ENCODE measurements at regions of chr1 and their contacts with region 1.

Region 1: GRCh38 chr1:91791103-91791502 is 94.8 kb downstream of the TGFBR3 start:
- DNase-seq: peak in 1 of 35 experiments; percentile 29
- ATAC-seq: peak in 3 of 4 experiments; percentile 38 to 55 (median 42)
- H3K4me3 ChIP-seq: no peak overlapping the region
- H3K4me3 Mint-ChIP-seq: peak overlapping the region in 1 of 3 donors; percentile 38
- H3K27ac ChIP-seq: no peak overlapping the region
- H3K27ac Mint-ChIP-seq: peak overlapping the region; percentile 62 to 79
- H3K4me1 ChIP-seq: peaks cover 22 to 27% of the 10 kb centered on the region in 2 experiments
- H3K4me1 Mint-ChIP-seq: peaks cover 31 to 45% (median 41%) of the 10 kb centered on the region in 3 donors
- H3K27me3 ChIP-seq: no peaks in the 10 kb centered on the region
- H3K27me3 Mint-ChIP-seq: no peaks in the 10 kb centered on the region

Region 2: DNA sequence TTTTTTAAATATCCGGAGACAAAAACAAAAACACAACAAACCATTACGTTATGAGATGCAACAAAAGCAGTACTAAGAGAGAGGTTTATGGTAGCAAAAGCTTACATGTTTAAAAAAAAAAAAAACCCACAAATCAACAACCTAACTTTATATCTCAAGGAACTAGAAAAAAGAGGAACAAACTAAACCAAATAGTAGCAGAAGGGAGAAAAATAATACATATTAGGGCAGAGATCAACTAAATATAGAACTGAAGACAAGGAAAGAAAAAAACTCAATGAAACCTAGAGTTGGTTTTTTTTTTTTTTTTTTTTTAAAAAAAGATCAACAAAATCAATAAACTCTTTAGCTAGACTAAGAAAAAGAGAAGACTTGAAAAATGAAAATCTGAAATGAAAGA is 804.1 kb before region 1 on chr1:
- CTCF ChIA-PET with region 1: interaction called in 1 of 2 experiments, 10 read pairs
- POLR2A ChIA-PET with region 1: no interaction called
- DNase-seq: no peak
- ATAC-seq: no peak
- H3K4me3 ChIP-seq: no peak overlapping the region
- H3K4me3 Mint-ChIP-seq: peak overlapping the region in 1 of 3 donors; percentile 2
- H3K27ac ChIP-seq: no peak overlapping the region
- H3K27ac Mint-ChIP-seq: no peak overlapping the region
- H3K4me1 ChIP-seq: peaks cover 0 to 4% of the 10 kb centered on the region in 2 experiments
- H3K4me1 Mint-ChIP-seq: peaks cover 68 to 83% (median 80%) of the 10 kb centered on the region in 3 donors
- H3K27me3 ChIP-seq: no peaks in the 10 kb centered on the region
- H3K27me3 Mint-ChIP-seq: no peaks in the 10 kb centered on the region

Region 3: DNA sequence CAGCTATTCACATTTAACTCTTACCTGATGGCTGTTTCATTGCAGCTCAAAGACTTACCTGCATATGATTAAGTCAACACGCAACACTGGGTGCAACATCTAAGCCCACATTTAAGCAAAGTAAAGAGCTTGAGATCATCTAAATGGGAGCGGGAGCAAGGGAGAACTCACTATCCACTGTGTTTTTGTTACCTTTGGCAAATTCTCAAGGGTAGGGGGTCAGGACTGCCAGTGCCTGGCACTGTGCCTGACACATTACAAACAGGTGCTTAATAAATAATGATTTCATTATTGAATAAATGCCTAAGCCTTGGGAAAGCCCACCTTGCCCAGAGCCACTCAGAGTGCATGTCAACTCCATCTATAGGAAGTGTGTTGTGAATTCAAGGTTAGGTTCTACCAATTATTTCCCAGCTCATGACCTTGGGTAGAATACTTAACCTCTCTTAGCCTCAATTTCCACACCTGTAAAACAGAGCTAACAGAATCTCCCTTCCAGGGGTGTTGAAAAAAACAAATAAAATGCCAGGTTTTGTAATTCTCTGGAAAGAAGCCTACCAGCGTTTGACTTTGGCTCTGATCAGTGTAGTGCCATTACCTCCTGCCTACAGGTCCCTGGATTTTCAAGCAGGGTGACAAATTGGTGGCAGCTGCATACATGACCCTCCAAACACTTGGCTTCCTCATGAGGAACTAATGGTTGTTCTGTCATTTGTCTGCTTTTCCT is 14.9 kb before region 1 on chr1:
- CTCF ChIA-PET with region 1: interaction called in 1 of 2 experiments, 3 read pairs
- POLR2A ChIA-PET with region 1: interaction called in 1 of 2 experiments, 16 read pairs
- DNase-seq: no peak
- ATAC-seq: no peak
- H3K4me3 ChIP-seq: no peak overlapping the region
- H3K4me3 Mint-ChIP-seq: no peak overlapping the region
- H3K27ac ChIP-seq: no peak overlapping the region
- H3K27ac Mint-ChIP-seq: no peak overlapping the region
- H3K4me1 ChIP-seq: peaks cover 0 to 5% of the 10 kb centered on the region in 2 experiments
- H3K4me1 Mint-ChIP-seq: peaks cover 0 to 32% (median 10%) of the 10 kb centered on the region in 3 donors
- H3K27me3 ChIP-seq: no peaks in the 10 kb centered on the region
- H3K27me3 Mint-ChIP-seq: no peaks in the 10 kb centered on the region

Region 4: DNA sequence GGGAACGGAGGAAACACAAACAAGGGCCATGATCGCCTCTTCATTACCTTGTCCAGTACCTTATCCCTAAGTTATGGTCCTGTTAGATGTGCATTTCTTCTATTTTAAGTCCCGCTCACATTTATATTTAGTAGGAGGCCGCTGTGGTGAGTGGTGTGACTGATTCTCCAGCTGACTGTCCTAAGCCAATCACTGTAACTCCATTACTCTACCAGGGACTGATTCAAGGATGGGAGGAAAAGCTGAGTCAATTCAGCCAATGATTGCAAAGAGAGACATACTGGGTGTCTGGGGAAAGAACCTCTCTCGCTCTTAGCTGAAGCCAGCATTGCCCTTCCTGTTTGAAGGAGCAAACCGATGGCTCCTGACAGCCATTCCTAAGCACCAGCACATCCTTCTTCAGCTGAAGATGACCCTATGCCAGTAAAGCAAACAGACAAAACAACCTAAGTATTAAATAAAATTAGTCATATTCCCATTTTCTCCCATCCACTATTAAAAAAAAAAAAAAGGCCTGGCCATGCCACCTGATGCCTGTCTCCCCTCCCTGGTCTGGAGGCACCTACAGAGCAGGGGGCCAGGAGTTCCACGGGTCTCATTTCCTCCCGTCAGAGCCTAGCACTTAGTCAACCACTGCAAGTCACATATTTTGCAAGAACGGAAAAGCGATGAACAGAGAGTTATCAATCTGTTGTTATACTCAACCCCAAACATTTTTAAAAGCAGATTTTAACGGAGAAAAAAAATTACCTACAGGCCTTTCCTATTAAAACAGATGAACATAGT is 35.3 kb after region 1 on chr1:
- CTCF ChIA-PET with region 1: no interaction called
- POLR2A ChIA-PET with region 1: no interaction called
- DNase-seq: no peak
- ATAC-seq: no peak
- H3K4me3 ChIP-seq: no peak overlapping the region
- H3K4me3 Mint-ChIP-seq: no peak overlapping the region
- H3K27ac ChIP-seq: no peak overlapping the region
- H3K27ac Mint-ChIP-seq: no peak overlapping the region
- H3K4me1 ChIP-seq: peaks cover 2 to 22% of the 10 kb centered on the region in 2 experiments
- H3K4me1 Mint-ChIP-seq: peaks cover 22 to 65% (median 43%) of the 10 kb centered on the region in 3 donors
- H3K27me3 ChIP-seq: no peaks in the 10 kb centered on the region
- H3K27me3 Mint-ChIP-seq: no peaks in the 10 kb centered on the region

Region 5: GRCh38 chr1:93638981-93639380 is 1847.9 kb after region 1 on chr1:
- CTCF ChIA-PET with region 1: no interaction called
- POLR2A ChIA-PET with region 1: interaction called in 1 of 2 experiments, 13 read pairs
- DNase-seq: no peak
- ATAC-seq: no peak
- H3K4me3 ChIP-seq: no peak overlapping the region
- H3K4me3 Mint-ChIP-seq: no peak overlapping the region
- H3K27ac ChIP-seq: no peak overlapping the region
- H3K27ac Mint-ChIP-seq: no peak overlapping the region
- H3K4me1 ChIP-seq: no peaks in the 10 kb centered on the region
- H3K4me1 Mint-ChIP-seq: peaks cover 6 to 7% (median 6%) of the 10 kb centered on the region in 3 donors
- H3K27me3 ChIP-seq: peaks cover 0 to 4% of the 10 kb centered on the region in 2 experiments
- H3K27me3 Mint-ChIP-seq: no peaks in the 10 kb centered on the region

Measured in T-cell (primary cell).